GM13977 (cell line): ENCODE measurements at regions of chr18 and their contacts with region 1.

Region 1: DNA sequence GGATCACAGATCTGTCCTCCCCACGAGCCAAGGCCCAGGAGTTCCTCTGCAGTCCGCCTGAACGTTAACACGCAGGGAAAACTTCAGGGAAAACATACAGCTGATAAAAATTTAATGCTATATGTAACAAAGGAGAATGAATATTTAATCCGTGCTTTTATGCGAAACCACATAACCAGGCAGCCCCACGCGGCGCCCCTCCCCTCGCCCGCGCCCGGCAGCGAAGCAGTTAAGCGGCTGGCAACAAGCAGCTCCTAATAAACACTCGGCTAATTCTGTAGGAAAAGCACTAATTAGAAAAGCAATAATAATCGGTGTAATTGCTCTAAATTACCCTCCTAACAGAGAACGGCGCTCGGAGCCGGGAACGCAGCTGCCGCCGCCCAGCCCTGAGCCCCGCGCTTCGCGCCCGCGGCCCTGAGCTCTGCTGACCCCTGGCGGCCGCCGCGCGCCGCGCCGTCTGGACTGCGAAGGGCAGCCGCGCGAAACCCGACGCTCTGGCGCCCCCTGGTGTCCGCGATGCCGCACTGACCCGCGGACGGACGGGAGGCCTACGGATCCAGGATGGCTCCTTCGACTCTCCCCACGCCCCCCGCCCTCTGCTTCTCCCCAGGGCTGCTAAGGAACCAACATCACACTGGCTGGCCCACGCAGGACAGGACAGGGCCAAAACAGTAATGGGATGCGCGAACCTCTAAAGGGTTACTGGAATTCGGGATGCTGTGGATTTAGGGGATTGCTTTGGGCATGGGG is 181.4 kb downstream of the SMAD2 start:
- DNase-seq: peak; percentile 92
- CTCF ChIP-seq: peak; percentile 100

Region 2: GRCh38 chr18:47594621-47595086 is 154.4 kb before region 1 on chr18:
- in situ Hi-C with region 1: loop called (anchors 5 kb)
- DNase-seq: no peak
- CTCF ChIP-seq: no peak